ENCODE measurements at regions of chr1 and their contacts with region 1.

Region 1: GRCh38 chr1:35931446-35932157 is 697 bp downstream of the AGO3 start:
- DNase-seq: peak; percentile 10
- H3K4me3 Mint-ChIP-seq: peak overlapping the region; percentile 89
- H3K27ac Mint-ChIP-seq: peak overlapping the region; percentile 97
- H3K4me1 Mint-ChIP-seq: peaks cover 38% of the 10 kb centered on the region
- H3K27me3 Mint-ChIP-seq: no peaks in the 10 kb centered on the region

Region 2: DNA sequence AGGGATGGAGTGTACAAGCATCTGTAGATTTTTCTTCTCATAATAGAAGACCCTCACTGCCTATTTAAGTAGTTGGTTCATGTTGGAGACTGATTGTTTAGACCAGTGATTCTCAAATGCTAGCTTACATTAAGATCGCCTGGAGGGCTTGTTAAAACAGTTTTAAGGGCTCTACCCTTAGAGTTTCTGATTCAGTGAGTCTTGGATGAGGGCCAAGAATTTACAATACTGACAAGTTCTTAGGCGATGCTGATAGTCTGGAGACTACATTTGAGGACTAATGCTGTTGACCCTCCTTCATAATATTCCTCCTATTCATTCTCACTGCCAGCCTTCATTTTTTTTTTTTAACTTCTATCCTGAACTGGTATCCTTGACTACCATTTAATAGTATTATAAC is 15.9 kb before region 1 on chr1:
- CTCF ChIA-PET with region 1: interaction called, 8 read pairs
- POLR2A ChIA-PET with region 1: interaction called, 10 read pairs
- DNase-seq: no peak
- H3K4me3 Mint-ChIP-seq: no peak overlapping the region
- H3K27ac Mint-ChIP-seq: no peak overlapping the region
- H3K4me1 Mint-ChIP-seq: no peaks in the 10 kb centered on the region
- H3K27me3 Mint-ChIP-seq: no peaks in the 10 kb centered on the region

Measured in activated CD4-positive, alpha-beta T cell treated with anti-CD3 and anti-CD28 coated beads, Interleukin-2, amount 10 ng/mL, durations not matched to agents 7 days and 5 days (primary cell).